CD4-positive, alpha-beta memory T cell (primary cell): ENCODE measurements at regions of chr11 and their contacts with region 1.

Region 1: DNA sequence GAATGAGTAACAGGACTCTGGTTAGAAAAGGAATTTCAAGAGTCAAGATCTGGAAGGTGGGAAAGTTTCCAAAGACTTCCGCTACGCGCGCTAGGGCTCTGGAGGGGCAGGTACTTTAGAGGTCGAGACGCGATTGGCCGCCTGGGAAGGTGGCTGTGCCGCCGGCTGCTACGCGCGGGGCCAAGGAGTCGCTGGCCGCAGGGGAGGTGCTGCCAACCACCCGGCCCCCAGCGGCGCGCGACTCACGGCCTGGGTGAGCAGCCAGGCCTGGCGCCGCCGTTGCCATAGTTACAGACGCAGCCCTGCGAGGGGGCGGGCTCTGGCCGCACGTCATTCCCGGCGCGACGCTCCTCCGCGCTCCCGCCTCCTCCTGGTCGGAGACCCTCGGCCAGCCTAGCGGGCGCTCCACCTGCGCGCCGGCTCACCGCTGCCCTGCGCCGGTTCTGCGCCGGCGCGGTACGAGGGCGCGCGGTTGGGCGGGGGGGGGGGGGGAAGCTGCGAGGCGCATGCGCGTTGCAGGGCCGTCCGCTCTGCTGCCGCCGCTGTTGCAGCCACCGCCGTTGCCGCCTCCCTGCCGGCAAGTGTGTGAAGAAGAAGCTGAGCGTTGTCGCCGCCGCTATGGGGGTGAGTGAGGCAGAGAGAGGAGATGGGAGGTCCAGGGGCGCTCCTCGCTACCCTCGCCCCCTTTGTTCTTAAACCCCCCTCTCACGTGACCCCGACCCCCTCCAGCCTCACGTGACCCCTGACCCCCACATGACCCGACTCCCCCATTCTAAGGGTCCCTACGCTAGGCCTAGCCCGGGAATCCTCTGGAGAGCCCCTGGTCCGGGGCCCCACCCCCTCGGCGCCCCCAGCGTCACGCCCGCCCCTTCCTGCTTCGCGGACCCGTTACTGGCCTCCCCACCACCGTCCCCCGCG is at the start of gene NAA40:
- DNase-seq: peak; percentile 89 to 92 (median 90)
- H3K4me3 ChIP-seq: peak within 1 kb of the TSS; percentile 62 to 81
- H3K4me3 Mint-ChIP-seq: peak within 1 kb of the TSS; percentile 90 to 98 (median 94)
- H3K27ac ChIP-seq: peak within 1 kb of the TSS; percentile 64
- H3K27ac Mint-ChIP-seq: peak within 1 kb of the TSS; percentile 88 to 98 (median 90)
- H3K4me1 ChIP-seq: peaks cover 22% of the 10 kb centered on the region
- H3K4me1 Mint-ChIP-seq: peaks cover 17 to 27% (median 20%) of the 10 kb centered on the region in 4 donors
- H3K27me3 ChIP-seq: no peaks in the 10 kb centered on the region
- H3K27me3 Mint-ChIP-seq: no peaks in the 10 kb centered on the region
- total RNA-seq, gene NAA40: 24.2 to 24.8 TPM

Region 2: DNA sequence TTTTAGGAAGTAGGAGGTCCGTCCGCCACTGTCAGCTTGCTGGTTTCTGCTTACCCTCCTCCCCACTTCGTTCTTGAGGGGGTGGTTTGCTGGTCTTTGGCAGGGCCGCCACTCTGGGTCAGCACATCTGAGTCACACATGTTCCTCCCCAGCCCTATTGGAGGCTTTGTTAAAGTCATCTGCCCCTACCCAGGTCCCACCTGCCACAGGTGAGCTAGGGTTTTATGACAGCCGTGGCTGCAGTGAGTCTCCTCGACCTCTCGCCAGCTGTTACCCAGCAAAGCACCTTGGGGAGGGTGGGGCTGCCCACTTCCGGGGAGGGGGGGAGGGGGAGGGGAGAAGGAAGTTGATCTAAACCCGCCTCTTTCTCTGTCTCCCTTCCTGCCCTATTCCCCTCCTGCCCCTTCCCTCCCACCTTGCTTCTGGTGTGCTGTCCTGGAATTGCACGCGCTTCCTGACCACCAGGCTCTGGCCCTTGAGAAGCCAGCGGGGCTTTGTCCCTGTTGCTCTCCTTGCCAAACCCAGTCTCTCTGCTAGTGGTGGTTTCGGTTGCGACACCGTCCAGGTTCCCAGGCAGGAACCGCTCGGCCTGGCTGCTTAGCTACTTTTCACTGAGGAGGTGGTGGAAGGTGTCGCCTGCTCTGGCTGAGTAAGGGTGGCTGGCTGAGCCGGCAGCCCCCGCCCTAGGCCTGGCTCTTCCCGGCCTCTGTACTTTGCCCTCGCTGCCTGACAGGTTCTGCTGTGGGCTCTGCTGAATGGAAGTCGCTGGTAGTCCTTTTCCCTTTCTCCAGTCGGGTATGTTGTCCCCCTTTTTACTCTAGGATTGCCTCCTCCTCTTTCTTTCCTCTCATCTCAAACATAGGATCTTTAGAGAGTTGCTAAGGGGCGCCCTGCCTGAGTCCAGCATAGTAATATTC is 50.3 kb before region 1 on chr11:
- CTCF ChIA-PET with region 1: no interaction called
- POLR2A ChIA-PET with region 1: no interaction called
- intact Hi-C with region 1: loop called (anchors 1 kb)
- DNase-seq: peak; percentile 70 to 83 (median 75)
- H3K4me3 ChIP-seq: peak overlapping the region; percentile 76 to 92
- H3K4me3 Mint-ChIP-seq: peak overlapping the region; percentile 90 to 99 (median 96)
- H3K27ac ChIP-seq: peak overlapping the region; percentile 69
- H3K27ac Mint-ChIP-seq: peak overlapping the region; percentile 94 to 99 (median 97)
- H3K4me1 ChIP-seq: peaks cover 81% of the 10 kb centered on the region
- H3K4me1 Mint-ChIP-seq: peaks cover 56 to 81% (median 69%) of the 10 kb centered on the region in 4 donors
- H3K27me3 ChIP-seq: no peaks in the 10 kb centered on the region
- H3K27me3 Mint-ChIP-seq: no peaks in the 10 kb centered on the region

Region 3: DNA sequence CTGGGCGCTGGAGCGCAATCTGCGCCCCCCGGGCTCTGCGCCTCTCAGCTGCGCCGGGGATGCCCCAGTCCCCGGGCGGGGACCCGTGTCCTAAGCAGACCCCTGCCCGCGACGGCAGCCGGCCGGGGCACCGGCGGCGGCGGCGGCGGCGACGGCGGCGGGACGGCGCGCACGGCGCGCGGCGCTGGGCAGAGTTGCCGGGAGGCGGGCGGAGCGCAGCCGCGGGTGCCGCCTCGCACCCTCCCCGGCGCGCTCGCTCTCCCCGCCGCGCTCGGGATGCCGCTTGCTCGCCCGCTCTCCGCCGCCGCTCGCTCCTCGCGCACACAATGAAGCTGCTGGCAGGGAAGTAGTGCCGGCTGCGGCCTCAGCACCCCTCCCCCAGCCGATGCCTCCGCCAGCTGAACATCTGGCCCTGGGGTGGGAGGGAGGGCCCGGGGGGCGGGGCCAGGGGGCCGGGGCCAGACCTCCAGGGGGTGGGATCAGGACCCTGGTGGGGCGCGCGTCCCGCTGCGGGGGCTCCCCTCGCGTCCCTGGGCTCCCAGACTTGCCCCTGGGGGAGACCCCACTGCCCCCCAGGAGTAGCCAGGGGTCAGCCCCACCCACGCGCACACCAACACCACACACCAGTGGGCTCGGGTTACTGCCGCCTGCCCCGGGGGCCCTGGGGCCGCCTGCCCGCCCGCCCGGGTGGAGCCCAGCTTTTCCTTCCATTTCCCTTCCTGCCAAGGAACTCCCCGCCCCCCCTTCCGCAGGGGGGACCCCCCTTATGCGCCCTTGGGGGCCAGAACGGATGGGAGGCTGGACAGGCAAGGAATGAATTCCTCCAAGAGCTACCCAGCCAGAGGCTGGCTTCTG is 21.7 kb before region 1 on chr11 and contains the start of gene RCOR2:
- CTCF ChIA-PET with region 1: no interaction called
- POLR2A ChIA-PET with region 1: interaction called, 3 read pairs
- intact Hi-C with region 1: loop called (anchors 2 kb)
- DNase-seq: peak; percentile 50 to 62 (median 57)
- H3K4me3 ChIP-seq: peak within 1 kb of the TSS; percentile 42 to 45
- H3K4me3 Mint-ChIP-seq: peak within 1 kb of the TSS; percentile 72 to 89 (median 80)
- H3K27ac ChIP-seq: no peak within 1 kb of the TSS
- H3K27ac Mint-ChIP-seq: peak within 1 kb of the TSS in 3 of 7 donors; percentile 55 to 80 (median 70)
- H3K4me1 ChIP-seq: peaks cover 28% of the 10 kb centered on the region
- H3K4me1 Mint-ChIP-seq: peaks cover 8 to 26% (median 12%) of the 10 kb centered on the region in 4 donors
- H3K27me3 ChIP-seq: no peaks in the 10 kb centered on the region
- H3K27me3 Mint-ChIP-seq: no peaks in the 10 kb centered on the region
- total RNA-seq, gene RCOR2: not detected

Region 4: GRCh38 chr11:63974259-63975143 is 35.8 kb after region 1 on chr11 and contains the start of gene COX8A:
- CTCF ChIA-PET with region 1: no interaction called
- POLR2A ChIA-PET with region 1: interaction called, 4 read pairs
- intact Hi-C with region 1: loop called (anchors 2 kb)
- DNase-seq: peak; percentile 94 to 98 (median 96)
- H3K4me3 ChIP-seq: peak within 1 kb of the TSS; percentile 90 to 100
- H3K4me3 Mint-ChIP-seq: peak within 1 kb of the TSS; percentile 96 to 100 (median 100)
- H3K27ac ChIP-seq: peak within 1 kb of the TSS; percentile 95
- H3K27ac Mint-ChIP-seq: peak within 1 kb of the TSS; percentile 99 to 100 (median 99)
- H3K4me1 ChIP-seq: peaks cover 20% of the 10 kb centered on the region
- H3K4me1 Mint-ChIP-seq: peaks cover 17 to 40% (median 31%) of the 10 kb centered on the region in 4 donors
- H3K27me3 ChIP-seq: no peaks in the 10 kb centered on the region
- H3K27me3 Mint-ChIP-seq: peaks cover 2% of the 10 kb centered on the region in 2 donors
- total RNA-seq, gene COX8A: 113 to 130 TPM

Region 5: DNA sequence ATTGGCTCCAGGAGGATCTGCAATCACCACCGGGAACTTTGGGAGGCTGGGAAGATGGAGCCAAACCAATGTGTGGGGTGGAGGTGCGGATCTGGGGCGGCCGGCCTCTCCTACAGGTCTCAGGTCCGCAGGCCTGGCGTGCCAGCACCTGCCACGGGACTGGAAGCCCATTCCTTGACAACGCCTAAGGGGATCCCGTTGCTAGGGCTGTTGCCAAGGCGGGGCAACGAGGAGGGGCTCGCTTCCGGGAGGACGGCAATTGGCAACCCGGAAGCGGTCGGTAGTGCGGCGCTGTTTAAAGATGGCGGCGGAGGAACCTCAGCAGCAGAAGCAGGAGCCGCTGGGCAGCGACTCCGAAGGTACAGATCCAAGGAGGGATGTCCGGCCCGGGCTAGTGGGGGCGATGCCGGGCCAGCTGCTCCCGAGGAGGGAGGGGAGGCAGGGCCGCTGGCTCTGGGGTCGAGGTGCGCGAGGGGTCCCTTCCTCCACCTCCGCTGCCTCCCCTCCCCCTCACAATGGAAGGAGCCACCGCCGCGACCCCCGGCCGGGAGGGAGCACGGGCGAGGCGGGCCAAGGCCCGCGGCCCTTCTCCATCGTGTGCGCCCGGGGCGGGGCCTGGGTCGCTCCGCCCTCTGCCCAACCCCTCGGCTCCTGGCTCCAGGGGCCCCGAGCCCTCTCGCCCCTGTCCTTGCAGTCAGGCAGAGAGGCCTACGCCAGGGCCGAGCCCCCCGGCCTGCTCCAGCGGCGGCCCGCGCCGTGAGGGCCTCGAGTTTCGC is 47.6 kb after region 1 on chr11 and contains the start of gene OTUB1:
- CTCF ChIA-PET with region 1: interaction called, 3 read pairs
- POLR2A ChIA-PET with region 1: interaction called, 5 read pairs
- intact Hi-C with region 1: loop called (anchors 1 kb)
- DNase-seq: peak; percentile 82 to 90 (median 84)
- H3K4me3 ChIP-seq: peak within 1 kb of the TSS; percentile 82 to 96
- H3K4me3 Mint-ChIP-seq: peak within 1 kb of the TSS; percentile 94 to 99 (median 97)
- H3K27ac ChIP-seq: peak within 1 kb of the TSS; percentile 96
- H3K27ac Mint-ChIP-seq: peak within 1 kb of the TSS; percentile 97 to 99 (median 98)
- H3K4me1 ChIP-seq: peaks cover 25% of the 10 kb centered on the region
- H3K4me1 Mint-ChIP-seq: peaks cover 13 to 31% (median 23%) of the 10 kb centered on the region in 4 donors
- H3K27me3 ChIP-seq: no peaks in the 10 kb centered on the region
- H3K27me3 Mint-ChIP-seq: no peaks in the 10 kb centered on the region
- total RNA-seq, gene OTUB1: 72.9 to 73.0 TPM